ENCODE measurements at regions of chr4 and their contacts with region 1.

Region 1: GRCh38 chr4:182917182-182918043 is at the start of gene DCTD:
- DNase-seq: peak; percentile 78
- H3K4me3 Mint-ChIP-seq: peak within 1 kb of the TSS; percentile 92
- H3K27ac Mint-ChIP-seq: peak within 1 kb of the TSS; percentile 97
- H3K4me1 Mint-ChIP-seq: peaks cover 50% of the 10 kb centered on the region
- H3K27me3 Mint-ChIP-seq: peaks cover 10% of the 10 kb centered on the region
- total RNA-seq, gene DCTD: 122 and 131 TPM in 2 replicates

Region 2: GRCh38 chr4:183098723-183099536 is 181.5 kb after region 1 on chr4 and contains the start of gene WWC2:
- intact Hi-C with region 1: loop called (anchors 2 kb)
- DNase-seq: peak; percentile 44
- H3K4me3 Mint-ChIP-seq: peak within 1 kb of the TSS; percentile 58
- H3K27ac Mint-ChIP-seq: no peak within 1 kb of the TSS
- H3K4me1 Mint-ChIP-seq: no peaks in the 10 kb centered on the region
- H3K27me3 Mint-ChIP-seq: peaks cover 68% of the 10 kb centered on the region
- total RNA-seq, gene WWC2: 0.39 and 0.75 TPM in 2 replicates

Region 3: GRCh38 chr4:183142571-183143550 is 225.4 kb after region 1 on chr4:
- intact Hi-C with region 1: no loop called
- DNase-seq: no peak
- H3K4me3 Mint-ChIP-seq: no peak overlapping the region
- H3K27ac Mint-ChIP-seq: no peak overlapping the region
- H3K4me1 Mint-ChIP-seq: no peaks in the 10 kb centered on the region
- H3K27me3 Mint-ChIP-seq: peaks cover 3% of the 10 kb centered on the region

Region 4: GRCh38 chr4:183398227-183399125 is 481.1 kb after region 1 on chr4:
- intact Hi-C with region 1: loop called (anchors 2 kb)
- DNase-seq: peak; percentile 46
- H3K4me3 Mint-ChIP-seq: peak overlapping the region; percentile 85
- H3K27ac Mint-ChIP-seq: peak overlapping the region; percentile 79
- H3K4me1 Mint-ChIP-seq: peaks cover 20% of the 10 kb centered on the region
- H3K27me3 Mint-ChIP-seq: peaks cover 36% of the 10 kb centered on the region

Measured in activated T-helper 1 cell treated with anti-CD3 and anti-CD28 coated beads, Interleukin-12 subunit alpha, Interleukin-12 subunit beta, Interleukin-2, Interleukin-4 antibody, amounts not matched to agents 30 ng/mL and 10 ng/mL and 1 ng/mL, durations not matched to agents 14 hours and 24 hours and 36 hours (primary cell).